Endothelial cell of umbilical vein (primary cell): ENCODE measurements at regions of chr9 and their contacts with region 1.

Region 1: GRCh38 chr9:15277400-15278090 is 29.5 kb downstream of the TTC39B start:
- DNase-seq: peak; percentile 48
- H3K4me3 ChIP-seq: no peak overlapping the region
- H3K27ac ChIP-seq: no peak overlapping the region
- H3K4me1 ChIP-seq: no peaks in the 10 kb centered on the region
- H3K27me3 ChIP-seq: no peaks in the 10 kb centered on the region
- CTCF ChIP-seq: peak in 1 of 2 donors; percentile 19
- POLR2A ChIP-seq: no peak

Region 2: GRCh38 chr9:15262581-15262980 is 15.0 kb before region 1 on chr9:
- CTCF ChIA-PET with region 1: interaction called, 7 read pairs
- POLR2A ChIA-PET with region 1: no interaction called
- dilution Hi-C with region 1: no loop called
- intact Hi-C with region 1: loop called (anchors 1 kb)
- DNase-seq: peak; percentile 18
- H3K4me3 ChIP-seq: no peak overlapping the region
- H3K27ac ChIP-seq: no peak overlapping the region
- H3K4me1 ChIP-seq: no peaks in the 10 kb centered on the region
- H3K27me3 ChIP-seq: no peaks in the 10 kb centered on the region
- CTCF ChIP-seq: no peak
- POLR2A ChIP-seq: no peak

Region 3: GRCh38 chr9:15416880-15417279 is 139.3 kb after region 1 on chr9:
- CTCF ChIA-PET with region 1: interaction called, 13 read pairs
- POLR2A ChIA-PET with region 1: no interaction called
- dilution Hi-C with region 1: no loop called
- intact Hi-C with region 1: loop called (anchors 1 kb)
- DNase-seq: peak; percentile 43
- H3K4me3 ChIP-seq: no peak overlapping the region
- H3K27ac ChIP-seq: no peak overlapping the region
- H3K4me1 ChIP-seq: peaks cover under 1% of the 10 kb centered on the region
- H3K27me3 ChIP-seq: no peaks in the 10 kb centered on the region
- CTCF ChIP-seq: no peak
- POLR2A ChIP-seq: no peak